Posterior vena cava (tissue), 2 donors: ENCODE measurements at regions of chr2 and their contacts with region 1.

Region 1: GRCh38 chr2:166545473-166545872 is 51.4 kb upstream of the SCN7A start:
- DNase-seq: no peak

Region 2: GRCh38 chr2:166148500-166149400 is 396.7 kb before region 1 on chr2:
- intact Hi-C with region 1: no loop called
- DNase-seq: no peak

Region 3: DNA sequence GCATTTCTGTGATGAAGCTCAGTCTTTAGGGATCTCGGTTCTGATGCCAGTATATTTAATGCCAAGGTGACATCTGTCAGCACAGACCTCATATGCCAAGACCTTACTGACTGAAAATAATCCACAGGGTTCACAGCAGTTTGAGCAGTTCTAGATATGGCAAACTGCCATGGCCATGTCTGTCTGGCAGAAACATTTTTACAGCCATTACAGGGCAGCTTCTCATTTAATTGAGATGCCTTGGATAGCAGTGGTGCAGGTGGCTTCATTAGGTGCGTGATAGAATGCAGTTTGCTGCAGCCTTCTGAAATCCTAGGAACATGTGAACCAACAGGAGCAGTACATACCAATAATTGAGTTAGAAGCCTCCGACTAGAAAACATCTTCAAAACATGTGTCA is 853.4 kb after region 1 on chr2:
- intact Hi-C with region 1: loop called in 1 of 2 experiments (anchors 5 kb)
- DNase-seq: no peak

Region 4: GRCh38 chr2:167689444-167689843 is 1144.0 kb after region 1 on chr2:
- intact Hi-C with region 1: no loop called
- DNase-seq: no peak